ENCODE measurements at regions of chr6 and their contacts with region 1.

Region 1: GRCh38 chr6:39952167-39952566 is 17.9 kb upstream of the MOCS1 start:
- DNase-seq: no peak
- H3K4me3 Mint-ChIP-seq: no peak overlapping the region
- H3K27ac Mint-ChIP-seq: no peak overlapping the region
- H3K4me1 Mint-ChIP-seq: no peaks in the 10 kb centered on the region
- H3K27me3 Mint-ChIP-seq: peaks cover 8% of the 10 kb centered on the region
- CTCF ChIP-seq: no peak

Region 2: DNA sequence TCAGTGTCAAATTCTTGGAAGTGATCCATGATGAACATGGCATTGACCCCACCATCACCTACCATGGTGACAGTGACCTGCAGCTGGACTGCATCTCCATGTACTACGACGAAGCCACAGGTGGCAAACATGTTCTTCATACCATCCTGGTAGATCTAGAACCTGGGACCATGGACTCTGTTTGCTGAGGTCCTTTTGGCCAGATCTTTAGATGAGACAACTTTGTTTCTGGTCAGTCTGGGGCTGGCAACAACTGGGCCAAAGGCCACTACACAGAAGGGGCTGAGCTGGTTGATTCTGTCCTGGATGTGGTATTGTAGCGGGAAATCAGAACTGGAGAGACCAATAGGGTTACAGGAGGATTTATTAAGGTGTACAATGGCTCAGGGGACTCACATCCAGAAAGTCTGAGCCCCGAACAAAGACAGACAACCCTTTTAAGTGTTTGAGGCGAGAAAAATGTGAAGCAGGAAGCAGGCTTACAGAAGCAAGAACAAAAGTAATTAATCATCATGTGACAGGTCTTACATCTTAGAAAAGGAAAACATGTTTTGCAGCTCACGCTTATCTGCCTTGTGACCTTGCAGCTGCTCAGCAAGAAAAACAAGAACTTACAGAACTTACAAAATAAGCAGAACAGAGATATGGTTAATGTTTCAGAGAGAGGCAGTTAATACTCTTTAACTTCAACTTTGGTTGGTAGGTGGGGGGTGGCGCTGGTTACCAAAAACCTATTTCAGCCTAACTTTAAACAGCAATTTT is 40.9 kb after region 1 on chr6:
- CTCF ChIA-PET with region 1: no interaction called
- intact Hi-C with region 1: no loop called
- DNase-seq: no peak
- H3K4me3 Mint-ChIP-seq: no peak overlapping the region
- H3K27ac Mint-ChIP-seq: no peak overlapping the region
- H3K4me1 Mint-ChIP-seq: no peaks in the 10 kb centered on the region
- H3K27me3 Mint-ChIP-seq: no peaks in the 10 kb centered on the region
- CTCF ChIP-seq: no peak

Region 3: GRCh38 chr6:40011844-40012243 is 59.7 kb after region 1 on chr6:
- CTCF ChIA-PET with region 1: no interaction called
- intact Hi-C with region 1: loop called (anchors 1 kb)
- DNase-seq: no peak
- H3K4me3 Mint-ChIP-seq: no peak overlapping the region
- H3K27ac Mint-ChIP-seq: no peak overlapping the region
- H3K4me1 Mint-ChIP-seq: no peaks in the 10 kb centered on the region
- H3K27me3 Mint-ChIP-seq: no peaks in the 10 kb centered on the region
- CTCF ChIP-seq: no peak

Region 4: DNA sequence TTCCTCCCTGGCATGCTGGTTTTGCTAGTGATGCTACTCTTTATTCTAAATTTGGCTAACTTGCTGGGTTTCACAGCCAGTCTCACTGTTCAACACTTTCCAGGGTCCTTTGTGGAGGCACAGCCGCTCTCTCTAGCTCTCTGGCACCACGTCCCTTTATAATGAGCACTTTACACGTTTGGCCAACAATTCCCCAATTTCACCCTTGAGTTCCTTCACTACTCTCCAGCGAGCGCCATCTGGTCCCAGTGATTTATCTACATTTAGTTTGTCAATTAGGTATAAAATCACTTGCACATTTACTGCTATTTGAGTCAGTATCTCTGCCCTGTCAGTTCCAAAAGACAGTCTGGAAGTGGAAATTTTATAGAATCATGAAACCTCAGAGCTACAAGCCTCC is 224.0 kb after region 1 on chr6:
- CTCF ChIA-PET with region 1: no interaction called
- intact Hi-C with region 1: no loop called
- DNase-seq: no peak
- H3K4me3 Mint-ChIP-seq: no peak overlapping the region
- H3K27ac Mint-ChIP-seq: no peak overlapping the region
- H3K4me1 Mint-ChIP-seq: no peaks in the 10 kb centered on the region
- H3K27me3 Mint-ChIP-seq: no peaks in the 10 kb centered on the region
- CTCF ChIP-seq: no peak

Measured in Calu3 (cell line).